IMR-90 (cell line): ENCODE measurements at regions of chr7 and their contacts with region 1.

Region 1: DNA sequence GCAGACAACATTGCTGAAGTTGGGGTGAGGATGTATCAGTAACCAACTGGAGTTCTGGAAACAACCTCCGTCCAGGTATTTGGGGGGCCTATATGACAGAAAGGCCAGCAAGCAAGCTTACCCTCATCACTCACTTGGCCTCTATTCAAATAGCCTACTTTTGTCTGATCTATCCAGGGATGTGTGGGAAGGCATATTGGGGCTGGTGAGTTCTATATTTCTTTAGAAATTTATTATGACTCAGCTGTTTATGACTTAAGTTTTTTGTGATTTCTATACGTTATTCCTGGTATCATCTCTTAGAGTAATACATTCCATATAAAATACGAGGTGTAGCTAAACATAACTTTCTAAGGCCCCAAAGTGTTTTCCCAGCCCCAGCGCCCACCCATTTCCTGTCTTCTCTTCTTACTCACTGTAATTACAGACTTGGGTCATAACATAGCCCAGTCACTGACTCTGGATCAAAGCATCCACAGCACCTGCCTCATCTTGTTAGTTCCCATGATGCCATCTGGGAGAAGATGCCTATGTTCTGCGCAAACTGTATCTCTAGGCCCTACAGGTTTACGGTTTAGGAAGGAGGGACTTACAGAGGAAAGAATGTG is 18.1 kb downstream of the GARS1 start:
- DNase-seq: peak; percentile 81
- ATAC-seq: peak; percentile 59
- H3K4me3 ChIP-seq: no peak overlapping the region
- H3K27ac ChIP-seq: peak overlapping the region; percentile 27; the same call in 1 of the 2 replicates
- H3K4me1 ChIP-seq: peaks cover 2% of the 10 kb centered on the region; the same call in 1 of the 2 replicates
- H3K27me3 ChIP-seq: no peaks in the 10 kb centered on the region
- CTCF ChIP-seq: no peak
- POLR2A ChIP-seq: no peak
- RAD21 ChIP-seq: no peak

Region 2: DNA sequence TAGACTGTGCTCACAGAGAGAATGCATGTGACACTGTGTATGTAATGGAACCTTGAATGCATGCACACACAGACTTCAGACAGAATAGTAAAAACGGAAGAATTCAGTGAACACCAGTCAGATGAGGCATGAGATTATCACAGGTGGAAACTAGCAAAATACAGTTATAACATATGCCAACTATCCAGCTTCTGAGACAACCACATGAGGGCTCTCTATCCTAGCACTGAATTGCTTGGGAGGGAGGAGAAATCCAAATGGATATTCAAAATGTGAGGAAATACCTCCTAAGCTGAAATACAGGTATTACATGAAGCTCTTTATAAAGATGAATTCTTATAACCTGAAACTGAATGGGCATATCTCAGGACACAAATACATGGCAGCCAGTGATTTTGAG is 12.5 kb after region 1 on chr7:
- CTCF ChIA-PET with region 1: no interaction called
- POLR2A ChIA-PET with region 1: no interaction called
- dilution Hi-C with region 1: no loop called
- in situ Hi-C with region 1: no loop called
- intact Hi-C with region 1: loop called (anchors 2 kb)
- DNase-seq: no peak
- ATAC-seq: no peak
- H3K4me3 ChIP-seq: no peak overlapping the region
- H3K27ac ChIP-seq: no peak overlapping the region
- H3K4me1 ChIP-seq: no peaks in the 10 kb centered on the region
- H3K27me3 ChIP-seq: no peaks in the 10 kb centered on the region
- CTCF ChIP-seq: no peak
- POLR2A ChIP-seq: no peak
- RAD21 ChIP-seq: no peak

Region 3: GRCh38 chr7:30799206-30799975 is 186.6 kb after region 1 on chr7:
- CTCF ChIA-PET with region 1: no interaction called
- POLR2A ChIA-PET with region 1: no interaction called
- dilution Hi-C with region 1: no loop called
- in situ Hi-C with region 1: no loop called
- intact Hi-C with region 1: no loop called
- DNase-seq: peak; percentile 93
- ATAC-seq: peak; percentile 37
- H3K4me3 ChIP-seq: no peak overlapping the region
- H3K27ac ChIP-seq: peak overlapping the region; percentile 68
- H3K4me1 ChIP-seq: peaks cover 49% of the 10 kb centered on the region
- H3K27me3 ChIP-seq: no peaks in the 10 kb centered on the region
- CTCF ChIP-seq: no peak
- POLR2A ChIP-seq: no peak
- RAD21 ChIP-seq: no peak